Pancreas (tissue), 10 donors: ENCODE measurements at regions of chr17 and their contacts with region 1.

Region 1: GRCh38 chr17:76307299-76307965 is 644 bp downstream of the QRICH2 start:
- DNase-seq: no peak
- ATAC-seq: no peak
- H3K4me3 ChIP-seq: no peak overlapping the region
- H3K27ac ChIP-seq: no peak overlapping the region
- H3K4me1 ChIP-seq: no peaks in the 10 kb centered on the region
- H3K27me3 ChIP-seq: no peaks in the 10 kb centered on the region
- CTCF ChIP-seq: no peak

Region 2: GRCh38 chr17:76219670-76220383 is 87.6 kb before region 1 on chr17:
- intact Hi-C with region 1: no loop called
- DNase-seq: no peak
- ATAC-seq: no peak
- H3K4me3 ChIP-seq: no peak overlapping the region
- H3K27ac ChIP-seq: no peak overlapping the region
- H3K4me1 ChIP-seq: no peaks in the 10 kb centered on the region
- H3K27me3 ChIP-seq: no peaks in the 10 kb centered on the region
- CTCF ChIP-seq: no peak

Region 3: DNA sequence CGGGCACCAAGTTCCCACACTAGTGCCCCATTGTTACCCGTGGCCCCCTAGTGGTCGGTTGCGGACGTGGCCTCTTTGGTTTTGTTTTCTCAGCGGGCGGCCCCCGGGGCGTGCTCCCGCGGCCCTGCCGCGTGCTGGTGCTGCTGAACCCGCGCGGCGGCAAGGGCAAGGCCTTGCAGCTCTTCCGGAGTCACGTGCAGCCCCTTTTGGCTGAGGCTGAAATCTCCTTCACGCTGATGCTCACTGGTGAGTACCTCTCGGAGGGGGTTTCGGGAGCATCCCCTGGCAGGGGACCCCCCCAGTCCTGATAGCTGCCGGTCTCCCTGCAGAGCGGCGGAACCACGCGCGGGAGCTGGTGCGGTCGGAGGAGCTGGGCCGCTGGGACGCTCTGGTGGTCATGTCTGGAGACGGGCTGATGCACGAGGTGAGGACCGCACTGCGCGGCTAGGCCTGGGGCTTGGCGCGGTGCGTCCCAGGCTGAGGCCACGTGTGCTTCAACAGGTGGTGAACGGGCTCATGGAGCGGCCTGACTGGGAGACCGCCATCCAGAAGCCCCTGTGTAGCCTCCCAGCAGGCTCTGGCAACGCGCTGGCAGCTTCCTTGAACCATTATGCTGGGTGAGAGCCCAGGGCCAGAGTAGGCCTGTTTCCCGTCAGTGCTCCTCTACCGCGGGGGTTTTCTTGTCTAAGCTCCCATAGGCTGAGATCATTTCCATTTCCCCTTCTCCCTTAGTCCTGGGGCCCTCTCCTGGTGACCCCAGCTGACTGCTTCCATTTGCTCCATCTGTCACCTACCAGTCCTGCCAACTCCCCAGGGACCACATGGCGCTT is 78.7 kb after region 1 on chr17:
- intact Hi-C with region 1: loop called in 2 of 3 experiments (anchors 5 to 10 kb)
- DNase-seq: peak; percentile 70 to 91 (median 82)
- ATAC-seq: peak; percentile 41 to 60 (median 55)
- H3K4me3 ChIP-seq: peak overlapping the region; percentile 14 to 77 (median 55)
- H3K27ac ChIP-seq: peak overlapping the region in 2 of 4 donors; percentile 33 to 89
- H3K4me1 ChIP-seq: peaks cover 0 to 14% (median 10%) of the 10 kb centered on the region in 3 donors
- H3K27me3 ChIP-seq: no peaks in the 10 kb centered on the region
- CTCF ChIP-seq: peak; percentile 83 to 92 (median 86)

Region 4: GRCh38 chr17:76397687-76398487 is 90.5 kb after region 1 on chr17:
- intact Hi-C with region 1: loop called (anchors 5 to 10 kb)
- DNase-seq: peak; percentile 76 to 99 (median 90)
- ATAC-seq: peak; percentile 75 to 94 (median 87)
- H3K4me3 ChIP-seq: no peak overlapping the region
- H3K27ac ChIP-seq: no peak overlapping the region
- H3K4me1 ChIP-seq: no peaks in the 10 kb centered on the region
- H3K27me3 ChIP-seq: no peaks in the 10 kb centered on the region
- CTCF ChIP-seq: peak; percentile 92 to 98 (median 97)